CD4-positive, alpha-beta memory T cell (primary cell): ENCODE measurements at regions of chr7 and their contacts with region 1.

Region 1: GRCh38 chr7:23531794-23532489 is at the start of gene TRA2A:
- DNase-seq: peak; percentile 92 to 96 (median 95)
- H3K4me3 ChIP-seq: peak within 1 kb of the TSS; percentile 67 to 90
- H3K4me3 Mint-ChIP-seq: peak within 1 kb of the TSS; percentile 98 to 100 (median 99)
- H3K27ac ChIP-seq: peak within 1 kb of the TSS; percentile 96
- H3K27ac Mint-ChIP-seq: peak within 1 kb of the TSS; percentile 100
- H3K4me1 ChIP-seq: peaks cover 40% of the 10 kb centered on the region
- H3K4me1 Mint-ChIP-seq: peaks cover 28 to 52% (median 40%) of the 10 kb centered on the region in 4 donors
- H3K27me3 ChIP-seq: no peaks in the 10 kb centered on the region
- H3K27me3 Mint-ChIP-seq: no peaks in the 10 kb centered on the region
- total RNA-seq, gene TRA2A: 143 to 145 TPM

Region 2: DNA sequence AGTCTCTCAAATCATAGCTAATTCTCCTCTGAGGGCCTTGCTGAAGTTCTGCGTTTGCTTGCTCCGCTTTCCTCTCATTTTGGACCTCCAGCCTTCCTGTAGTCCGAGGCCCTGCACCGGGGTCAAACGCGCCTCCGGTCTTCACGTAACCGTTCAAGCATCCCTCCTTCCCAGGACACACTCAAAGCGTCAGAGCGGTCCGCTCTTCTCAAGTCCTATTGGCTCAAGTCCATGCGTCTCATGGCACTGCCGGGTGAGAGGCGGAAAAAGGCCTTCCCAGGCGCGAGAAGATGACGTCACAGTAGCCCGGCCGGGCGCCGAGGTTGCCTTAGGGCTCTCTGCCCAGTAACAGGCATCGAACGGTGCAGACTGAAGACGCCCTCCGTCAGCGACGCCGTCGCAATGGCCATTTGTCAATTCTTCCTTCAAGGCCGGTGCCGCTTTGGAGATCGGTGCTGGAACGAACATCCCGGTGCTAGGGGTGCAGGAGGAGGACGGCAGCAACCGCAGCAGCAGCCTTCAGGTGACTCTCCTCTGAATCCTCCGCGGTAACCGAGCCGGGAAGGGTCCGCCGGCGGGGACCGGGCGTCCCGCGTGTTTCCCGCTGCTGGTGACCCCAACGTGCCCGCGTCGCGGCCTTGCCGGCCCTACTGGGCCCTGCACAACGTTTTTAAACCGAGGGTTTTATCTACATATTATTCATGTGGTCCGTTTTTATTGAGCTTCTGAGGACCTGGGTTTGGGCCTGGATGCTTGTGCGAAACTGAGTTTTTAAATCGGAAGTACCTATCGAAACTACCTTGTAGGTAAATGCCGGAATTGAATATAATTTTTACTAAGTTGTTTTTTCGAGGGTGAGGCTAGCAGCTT is 350.0 kb before region 1 on chr7 and contains the start of gene NUP42:
- CTCF ChIA-PET with region 1: no interaction called
- POLR2A ChIA-PET with region 1: no interaction called
- intact Hi-C with region 1: loop called (anchors 5 kb)
- DNase-seq: peak; percentile 93 to 96 (median 95)
- H3K4me3 ChIP-seq: peak within 1 kb of the TSS; percentile 95 to 98
- H3K4me3 Mint-ChIP-seq: peak within 1 kb of the TSS; percentile 94 to 100 (median 98)
- H3K27ac ChIP-seq: peak within 1 kb of the TSS; percentile 90
- H3K27ac Mint-ChIP-seq: peak within 1 kb of the TSS; percentile 96 to 100 (median 99)
- H3K4me1 ChIP-seq: peaks cover 38% of the 10 kb centered on the region
- H3K4me1 Mint-ChIP-seq: peaks cover 24 to 43% (median 27%) of the 10 kb centered on the region in 4 donors
- H3K27me3 ChIP-seq: no peaks in the 10 kb centered on the region
- H3K27me3 Mint-ChIP-seq: peaks cover 0 to 2% of the 10 kb centered on the region in 2 donors
- total RNA-seq, gene NUP42: 33.3 to 37.8 TPM

Region 3: DNA sequence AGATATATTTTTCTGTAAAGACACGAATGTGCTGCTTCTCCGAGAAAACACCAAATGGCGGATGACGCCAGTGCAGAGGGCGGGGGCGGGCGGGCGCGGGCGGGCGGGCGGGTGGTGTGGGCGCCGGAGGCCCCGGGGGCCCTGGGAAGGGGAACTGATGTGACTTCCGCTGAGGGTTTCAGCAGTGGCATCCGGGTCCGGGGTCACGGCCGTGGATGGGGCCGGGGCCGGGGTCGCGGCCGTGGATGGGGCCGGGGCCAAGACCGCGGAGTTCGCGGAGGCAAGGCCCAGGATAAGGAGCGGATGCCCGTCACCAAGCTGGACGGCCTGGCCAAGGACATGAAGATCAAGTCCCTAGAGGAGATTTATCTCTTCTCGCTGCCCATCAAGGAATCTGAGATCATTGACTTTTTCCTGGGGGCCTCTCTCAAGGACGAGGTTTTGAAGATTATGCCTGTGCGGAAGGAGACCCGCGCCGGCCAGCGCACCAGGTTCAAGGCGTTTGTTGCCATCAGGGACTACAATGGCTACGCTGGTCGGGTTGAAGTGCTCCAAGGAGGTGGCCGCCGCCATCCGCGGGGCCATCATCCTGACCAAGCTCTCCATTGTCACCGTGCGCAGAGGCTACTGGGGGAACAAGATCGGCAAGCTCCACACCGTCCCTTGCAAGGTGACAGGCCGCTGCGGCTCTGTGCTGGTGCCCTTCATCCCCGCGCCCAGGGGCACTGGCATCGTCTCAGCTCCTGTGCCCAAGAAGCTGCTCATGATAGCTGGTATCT is 41.4 kb before region 1 on chr7:
- CTCF ChIA-PET with region 1: no interaction called
- POLR2A ChIA-PET with region 1: interaction called, 8 read pairs
- intact Hi-C with region 1: loop called (anchors 5 kb)
- DNase-seq: peak; percentile 59 to 70 (median 66)
- H3K4me3 ChIP-seq: peak overlapping the region; percentile 29 to 59
- H3K4me3 Mint-ChIP-seq: peak overlapping the region; percentile 82 to 90 (median 86)
- H3K27ac ChIP-seq: peak overlapping the region; percentile 28
- H3K27ac Mint-ChIP-seq: peak overlapping the region; percentile 80 to 93 (median 88)
- H3K4me1 ChIP-seq: peaks cover 5% of the 10 kb centered on the region
- H3K4me1 Mint-ChIP-seq: peaks cover 2 to 12% (median 8%) of the 10 kb centered on the region in 4 donors
- H3K27me3 ChIP-seq: no peaks in the 10 kb centered on the region
- H3K27me3 Mint-ChIP-seq: no peaks in the 10 kb centered on the region

Region 4: GRCh38 chr7:23597094-23598091 is 65.5 kb after region 1 on chr7 and contains the start of gene CCDC126:
- CTCF ChIA-PET with region 1: no interaction called
- POLR2A ChIA-PET with region 1: interaction called, 9 read pairs
- intact Hi-C with region 1: loop called (anchors 2 kb)
- DNase-seq: peak; percentile 73 to 80 (median 74)
- H3K4me3 ChIP-seq: peak within 1 kb of the TSS; percentile 61 to 67
- H3K4me3 Mint-ChIP-seq: peak within 1 kb of the TSS; percentile 86 to 96 (median 92)
- H3K27ac ChIP-seq: peak within 1 kb of the TSS; percentile 79
- H3K27ac Mint-ChIP-seq: peak within 1 kb of the TSS; percentile 47 to 91 (median 88)
- H3K4me1 ChIP-seq: peaks cover 19% of the 10 kb centered on the region
- H3K4me1 Mint-ChIP-seq: peaks cover 21 to 40% (median 35%) of the 10 kb centered on the region in 4 donors
- H3K27me3 ChIP-seq: no peaks in the 10 kb centered on the region
- H3K27me3 Mint-ChIP-seq: no peaks in the 10 kb centered on the region
- total RNA-seq, gene CCDC126: 15.5 to 17.7 TPM

Region 5: GRCh38 chr7:23721456-23721855 is 189.5 kb after region 1 on chr7:
- CTCF ChIA-PET with region 1: no interaction called
- POLR2A ChIA-PET with region 1: no interaction called
- intact Hi-C with region 1: no loop called
- DNase-seq: no peak
- H3K4me3 ChIP-seq: no peak overlapping the region
- H3K4me3 Mint-ChIP-seq: no peak overlapping the region
- H3K27ac ChIP-seq: no peak overlapping the region
- H3K27ac Mint-ChIP-seq: peak overlapping the region in 1 of 7 donors; percentile 44
- H3K4me1 ChIP-seq: no peaks in the 10 kb centered on the region
- H3K4me1 Mint-ChIP-seq: no peaks in the 10 kb centered on the region
- H3K27me3 ChIP-seq: no peaks in the 10 kb centered on the region
- H3K27me3 Mint-ChIP-seq: no peaks in the 10 kb centered on the region

Region 6: GRCh38 chr7:25179771-25180591 is 1648.0 kb after region 1 on chr7:
- CTCF ChIA-PET with region 1: no interaction called
- POLR2A ChIA-PET with region 1: no interaction called
- intact Hi-C with region 1: loop called (anchors 10 kb)
- DNase-seq: peak; percentile 90 to 95 (median 91)
- H3K4me3 ChIP-seq: peak overlapping the region; percentile 45 to 71
- H3K4me3 Mint-ChIP-seq: peak overlapping the region; percentile 88 to 95 (median 92)
- H3K27ac ChIP-seq: peak overlapping the region; percentile 68
- H3K27ac Mint-ChIP-seq: peak overlapping the region; percentile 76 to 96 (median 93)
- H3K4me1 ChIP-seq: peaks cover 12% of the 10 kb centered on the region
- H3K4me1 Mint-ChIP-seq: peaks cover 5 to 27% (median 18%) of the 10 kb centered on the region in 4 donors
- H3K27me3 ChIP-seq: no peaks in the 10 kb centered on the region
- H3K27me3 Mint-ChIP-seq: no peaks in the 10 kb centered on the region